K562 (cell line): ENCODE measurements at regions of chr7 and their contacts with region 1.

Region 1: DNA sequence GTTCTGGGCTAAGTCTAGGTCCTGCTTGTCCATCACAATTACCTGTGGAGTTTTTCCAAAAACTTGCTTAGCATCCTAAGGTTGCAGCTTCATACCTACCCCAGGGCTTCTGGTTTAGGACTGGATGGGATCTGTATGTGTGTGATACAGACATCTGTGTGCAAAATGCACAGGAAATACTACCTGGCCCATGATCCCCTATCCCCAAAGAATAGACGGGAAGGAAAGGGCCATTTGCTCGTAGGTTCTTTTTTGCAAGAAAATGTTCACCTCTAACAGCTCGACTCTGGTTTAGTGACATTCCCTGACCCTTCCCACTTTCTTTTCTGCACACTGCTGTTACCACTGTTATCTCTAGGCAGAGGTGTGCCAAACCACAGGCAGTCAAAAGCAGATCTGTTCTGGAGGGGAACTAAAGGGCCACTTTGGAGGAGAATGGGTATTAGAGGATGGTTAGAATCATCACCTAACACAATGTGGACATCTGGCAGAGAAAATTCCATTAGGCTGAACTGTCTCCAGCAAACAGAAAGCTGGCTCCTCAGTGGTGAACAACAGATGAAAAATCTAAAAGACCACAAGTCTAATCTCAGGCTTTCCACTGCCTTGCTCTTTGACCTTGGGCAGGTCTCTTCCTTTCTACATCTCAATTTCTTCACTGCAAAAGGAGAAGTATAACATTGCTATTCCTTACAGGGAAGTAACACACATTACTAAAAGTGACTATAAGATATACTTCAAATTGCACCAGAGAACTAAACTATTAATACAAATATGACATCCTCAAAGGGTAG is 107.4 kb downstream of the UBE2H start:
- DNase-seq: peak in 2 of 4 experiments; percentile 39 to 70
- ATAC-seq: peak; percentile 74
- H3K4me3 ChIP-seq: no peak overlapping the region
- H3K27ac ChIP-seq: no peak overlapping the region
- H3K4me1 ChIP-seq: peaks cover 5 to 28% of the 10 kb centered on the region in 2 experiments; a peak in 4 of 5 replicates
- H3K27me3 ChIP-seq: no peaks in the 10 kb centered on the region
- CTCF ChIP-seq: no peak
- EP300 ChIP-seq: 0 out of 2 replicates have a peak, but pooled peaks have one; percentile 26
- POLR2A ChIP-seq: no peak
- RAD21 ChIP-seq: no peak

Region 2: GRCh38 chr7:129767120-129768015 is 78.0 kb before region 1 on chr7:
- CTCF ChIA-PET with region 1: no interaction called
- POLR2A ChIA-PET with region 1: no interaction called
- in situ Hi-C with region 1: no loop called
- intact Hi-C with region 1: no loop called
- DNase-seq: no peak
- ATAC-seq: no peak
- H3K4me3 ChIP-seq: peak overlapping the region; percentile 25; the same call in 1 of the 2 replicates
- H3K27ac ChIP-seq: peak overlapping the region; percentile 81
- H3K4me1 ChIP-seq: peaks cover 46 to 78% of the 10 kb centered on the region in 2 experiments
- H3K27me3 ChIP-seq: no peaks in the 10 kb centered on the region
- CTCF ChIP-seq: no peak
- EP300 ChIP-seq: no peak
- POLR2A ChIP-seq: no peak
- RAD21 ChIP-seq: no peak

Region 3: DNA sequence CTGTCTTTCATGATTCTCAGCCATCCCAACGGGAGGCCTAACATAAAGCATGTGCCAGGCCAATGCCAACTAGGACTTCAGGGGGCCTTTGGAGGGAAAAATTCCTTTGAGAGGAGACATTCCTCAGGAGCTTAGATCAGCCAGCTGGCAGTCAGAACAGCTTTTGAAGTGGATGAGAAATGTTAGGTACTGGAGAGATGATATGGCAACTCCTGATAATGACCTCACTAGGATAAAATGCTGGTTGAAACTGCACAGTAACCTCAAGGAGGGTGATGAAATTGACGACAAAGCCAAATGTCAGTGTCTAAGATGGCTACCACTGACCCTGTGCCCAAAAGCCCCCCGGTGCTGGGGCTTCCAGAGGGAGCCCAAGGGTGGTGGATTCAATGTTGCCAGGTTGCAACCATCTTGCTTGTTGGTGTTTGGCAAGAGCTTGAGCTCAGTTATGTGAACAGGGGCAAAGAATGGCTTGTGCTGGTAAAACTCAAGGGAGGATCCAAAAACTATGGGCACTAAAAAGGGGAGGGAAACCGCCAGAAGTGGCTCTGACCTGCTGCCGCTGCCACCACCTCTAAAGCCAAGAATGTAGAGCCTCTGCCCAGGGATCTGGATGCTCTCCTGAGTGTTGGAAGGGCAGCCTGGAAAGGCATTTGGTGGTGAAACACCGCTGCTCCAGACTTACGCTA is 13.8 kb before region 1 on chr7:
- CTCF ChIA-PET with region 1: no interaction called
- POLR2A ChIA-PET with region 1: interaction called, 8 read pairs
- in situ Hi-C with region 1: no loop called
- intact Hi-C with region 1: loop called (anchors 2 kb)
- DNase-seq: peak in 1 of 4 experiments; percentile 37
- ATAC-seq: peak; percentile 50
- H3K4me3 ChIP-seq: no peak overlapping the region
- H3K27ac ChIP-seq: no peak overlapping the region; the same call in 2 of the 3 replicates
- H3K4me1 ChIP-seq: peaks cover 9 to 32% of the 10 kb centered on the region in 2 experiments; a peak in 4 of 5 replicates
- H3K27me3 ChIP-seq: no peaks in the 10 kb centered on the region
- CTCF ChIP-seq: no peak
- EP300 ChIP-seq: peak; percentile 52
- POLR2A ChIP-seq: no peak
- RAD21 ChIP-seq: no peak

Region 4: GRCh38 chr7:129952653-129953560 is 107.5 kb after region 1 on chr7 and contains the start of gene UBE2H:
- CTCF ChIA-PET with region 1: interaction called, 3 read pairs
- POLR2A ChIA-PET with region 1: interaction called, 3 read pairs
- in situ Hi-C with region 1: no loop called
- intact Hi-C with region 1: loop called (anchors 5 kb)
- DNase-seq: peak; percentile 98 to 99 (median 99)
- ATAC-seq: peak; percentile 80
- H3K4me3 ChIP-seq: peak within 1 kb of the TSS; percentile 69
- H3K27ac ChIP-seq: peak within 1 kb of the TSS; percentile 74
- H3K4me1 ChIP-seq: peaks cover 45 to 53% of the 10 kb centered on the region in 2 experiments
- H3K27me3 ChIP-seq: no peaks in the 10 kb centered on the region
- CTCF ChIP-seq: peak in 1 of 3 experiments; percentile 21; a peak in 1 of 6 replicates
- EP300 ChIP-seq: no peak; the same call in 1 of the 2 replicates
- POLR2A ChIP-seq: peak; percentile 73
- RAD21 ChIP-seq: peak in 1 of 2 experiments; percentile 12; a peak in 1 of 4 replicates
- polyA plus RNA-seq, gene UBE2H: 6.3 to 6.9 TPM